ENCODE measurements at regions of chr5 and their contacts with region 1.

Region 1: GRCh38 chr5:65481635-65482295 is at the start of gene ADAMTS6:
- DNase-seq: peak in 1 of 2 experiments; percentile 58
- H3K4me3 ChIP-seq: peak within 1 kb of the TSS; percentile 85
- H3K27ac ChIP-seq: 0 out of 2 replicates have a peak within 1 kb of the TSS, but pooled peaks have one; percentile 2
- H3K4me1 ChIP-seq: peaks cover 26% of the 10 kb centered on the region
- H3K27me3 ChIP-seq: no peaks in the 10 kb centered on the region
- CTCF ChIP-seq: no peak
- total RNA-seq, gene ADAMTS6: 1.4 and 2.1 TPM in 2 replicates

Region 2: GRCh38 chr5:64634997-64635686 is 846.6 kb before region 1 on chr5:
- CTCF ChIA-PET with region 1: interaction called, 3 read pairs
- POLR2A ChIA-PET with region 1: no interaction called
- intact Hi-C with region 1: loop called (anchors 1 kb)
- DNase-seq: no peak
- H3K4me3 ChIP-seq: no peak overlapping the region
- H3K27ac ChIP-seq: no peak overlapping the region
- H3K4me1 ChIP-seq: no peaks in the 10 kb centered on the region
- H3K27me3 ChIP-seq: no peaks in the 10 kb centered on the region
- CTCF ChIP-seq: peak; percentile 91

Region 3: GRCh38 chr5:64869419-64869818 is 612.3 kb before region 1 on chr5:
- CTCF ChIA-PET with region 1: no interaction called
- POLR2A ChIA-PET with region 1: interaction called, 15 read pairs
- intact Hi-C with region 1: no loop called
- DNase-seq: no peak
- H3K4me3 ChIP-seq: no peak overlapping the region
- H3K27ac ChIP-seq: no peak overlapping the region
- H3K4me1 ChIP-seq: peaks cover 6% of the 10 kb centered on the region; the same call in 1 of the 2 replicates
- H3K27me3 ChIP-seq: no peaks in the 10 kb centered on the region
- CTCF ChIP-seq: no peak

Region 4: GRCh38 chr5:64958757-64959391 is 522.9 kb before region 1 on chr5:
- CTCF ChIA-PET with region 1: interaction called, 3 read pairs
- POLR2A ChIA-PET with region 1: interaction called, 3 read pairs
- intact Hi-C with region 1: loop called (anchors 1 kb)
- DNase-seq: no peak
- H3K4me3 ChIP-seq: no peak overlapping the region
- H3K27ac ChIP-seq: no peak overlapping the region
- H3K4me1 ChIP-seq: no peaks in the 10 kb centered on the region
- H3K27me3 ChIP-seq: no peaks in the 10 kb centered on the region
- CTCF ChIP-seq: peak; percentile 74

Region 5: DNA sequence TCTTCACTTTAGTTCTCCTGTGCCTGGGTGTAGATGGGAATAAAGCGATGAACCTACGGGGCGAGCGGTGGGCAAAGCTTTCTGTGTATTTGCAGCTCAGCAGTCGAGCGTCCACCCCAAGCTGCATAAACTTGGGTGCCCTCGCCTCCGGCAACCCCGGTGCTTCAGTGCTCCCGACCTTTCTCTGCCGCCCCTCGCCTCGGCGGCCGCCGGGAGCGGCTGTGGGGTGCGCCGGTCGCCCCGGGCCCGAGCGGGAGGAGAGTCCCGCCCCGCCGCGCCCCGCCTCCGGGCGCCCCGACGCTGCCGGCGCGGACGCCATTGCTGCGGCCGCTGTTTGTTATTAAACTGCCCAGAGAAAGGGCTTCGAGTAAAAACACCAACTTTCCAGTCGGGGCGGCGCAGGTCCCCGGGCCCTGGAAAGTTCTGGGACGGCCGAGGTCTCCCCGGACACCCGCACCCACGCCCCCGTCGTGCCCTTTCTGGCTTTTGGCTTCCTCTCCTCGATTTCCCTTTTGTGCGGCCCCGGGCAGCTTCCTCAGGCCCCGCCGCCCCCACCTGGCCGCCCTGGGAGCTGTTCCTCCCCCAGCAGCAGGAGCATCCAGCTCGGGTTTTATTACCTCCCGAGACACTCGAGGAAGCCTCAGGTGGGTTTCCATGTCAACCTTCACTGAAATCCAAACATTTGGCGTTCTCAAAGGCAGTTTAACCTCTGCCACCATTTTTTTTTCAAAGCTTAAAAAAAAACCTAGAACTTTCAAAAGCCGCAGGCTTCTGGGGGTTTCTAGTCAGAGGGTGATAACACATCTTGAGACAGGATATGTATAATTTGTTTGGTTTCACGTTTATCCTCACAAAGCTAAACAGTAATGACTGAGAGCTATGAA is 378.7 kb before region 1 on chr5:
- CTCF ChIA-PET with region 1: interaction called, 3 read pairs
- POLR2A ChIA-PET with region 1: no interaction called
- intact Hi-C with region 1: loop called (anchors 1 kb)
- DNase-seq: peak; percentile 59 to 60
- H3K4me3 ChIP-seq: peak overlapping the region; percentile 85
- H3K27ac ChIP-seq: peak overlapping the region; percentile 45; the same call in 1 of the 2 replicates
- H3K4me1 ChIP-seq: peaks cover 7% of the 10 kb centered on the region; the same call in 1 of the 2 replicates
- H3K27me3 ChIP-seq: no peaks in the 10 kb centered on the region
- CTCF ChIP-seq: peak; percentile 50

Region 6: GRCh38 chr5:65213921-65214525 is 267.7 kb before region 1 on chr5:
- CTCF ChIA-PET with region 1: no interaction called
- POLR2A ChIA-PET with region 1: no interaction called
- intact Hi-C with region 1: loop called (anchors 5 kb)
- DNase-seq: no peak
- H3K4me3 ChIP-seq: no peak overlapping the region
- H3K27ac ChIP-seq: no peak overlapping the region
- H3K4me1 ChIP-seq: peaks cover 7% of the 10 kb centered on the region
- H3K27me3 ChIP-seq: no peaks in the 10 kb centered on the region
- CTCF ChIP-seq: peak; percentile 58; the same call in 1 of the 2 replicates

Region 7: DNA sequence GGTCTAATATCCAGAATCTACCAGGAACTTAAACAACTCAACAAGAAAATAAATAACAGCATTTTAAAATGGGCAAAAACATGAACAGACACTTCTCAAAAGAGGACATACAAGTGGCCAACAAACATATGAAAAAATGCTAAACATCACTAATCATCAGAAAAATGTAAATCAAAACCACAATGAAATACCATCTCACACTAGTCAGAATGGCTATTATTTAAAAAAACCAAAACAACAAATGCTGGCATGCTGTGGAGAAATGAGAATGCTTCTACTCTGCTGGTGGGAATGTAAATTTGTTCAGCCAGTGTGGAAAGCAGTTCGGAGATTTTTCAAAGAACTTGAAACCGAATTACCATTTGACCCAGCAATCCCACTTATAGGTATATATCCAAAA is 63.1 kb before region 1 on chr5:
- CTCF ChIA-PET with region 1: no interaction called
- POLR2A ChIA-PET with region 1: no interaction called
- intact Hi-C with region 1: no loop called
- DNase-seq: no peak
- H3K4me3 ChIP-seq: no peak overlapping the region
- H3K27ac ChIP-seq: no peak overlapping the region
- H3K4me1 ChIP-seq: no peaks in the 10 kb centered on the region
- H3K27me3 ChIP-seq: no peaks in the 10 kb centered on the region
- CTCF ChIP-seq: no peak

Region 8: GRCh38 chr5:65468633-65469032 is 13.1 kb before region 1 on chr5:
- CTCF ChIA-PET with region 1: no interaction called
- POLR2A ChIA-PET with region 1: no interaction called
- intact Hi-C with region 1: no loop called
- DNase-seq: no peak
- H3K4me3 ChIP-seq: no peak overlapping the region
- H3K27ac ChIP-seq: no peak overlapping the region
- H3K4me1 ChIP-seq: no peaks in the 10 kb centered on the region
- H3K27me3 ChIP-seq: no peaks in the 10 kb centered on the region
- CTCF ChIP-seq: no peak

Region 9: DNA sequence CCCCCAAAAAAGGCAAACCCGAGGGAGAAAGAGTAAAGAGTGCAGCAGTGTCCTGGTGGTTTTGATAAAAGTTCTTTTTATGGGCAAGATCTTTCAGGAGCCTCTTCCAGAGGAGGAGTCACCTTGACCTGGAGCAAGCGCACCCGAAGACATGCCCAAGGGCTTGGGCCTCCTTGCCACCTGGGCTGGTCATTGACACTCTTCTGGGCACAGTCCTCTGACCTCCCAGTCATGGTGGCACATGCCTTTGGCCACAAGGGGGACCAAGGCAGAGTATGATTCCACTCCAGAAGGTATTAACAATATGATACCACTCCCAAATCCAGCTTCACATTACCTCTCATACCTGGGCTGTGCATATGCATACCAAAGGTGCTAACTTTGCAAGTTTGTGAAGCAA is 1199.0 kb after region 1 on chr5:
- CTCF ChIA-PET with region 1: no interaction called
- POLR2A ChIA-PET with region 1: no interaction called
- intact Hi-C with region 1: no loop called
- DNase-seq: no peak
- H3K4me3 ChIP-seq: no peak overlapping the region
- H3K27ac ChIP-seq: no peak overlapping the region
- H3K4me1 ChIP-seq: no peaks in the 10 kb centered on the region
- H3K27me3 ChIP-seq: peaks cover 6% of the 10 kb centered on the region
- CTCF ChIP-seq: no peak